ENCODE measurements at regions of chr19 and their contacts with region 1.

Region 1: DNA sequence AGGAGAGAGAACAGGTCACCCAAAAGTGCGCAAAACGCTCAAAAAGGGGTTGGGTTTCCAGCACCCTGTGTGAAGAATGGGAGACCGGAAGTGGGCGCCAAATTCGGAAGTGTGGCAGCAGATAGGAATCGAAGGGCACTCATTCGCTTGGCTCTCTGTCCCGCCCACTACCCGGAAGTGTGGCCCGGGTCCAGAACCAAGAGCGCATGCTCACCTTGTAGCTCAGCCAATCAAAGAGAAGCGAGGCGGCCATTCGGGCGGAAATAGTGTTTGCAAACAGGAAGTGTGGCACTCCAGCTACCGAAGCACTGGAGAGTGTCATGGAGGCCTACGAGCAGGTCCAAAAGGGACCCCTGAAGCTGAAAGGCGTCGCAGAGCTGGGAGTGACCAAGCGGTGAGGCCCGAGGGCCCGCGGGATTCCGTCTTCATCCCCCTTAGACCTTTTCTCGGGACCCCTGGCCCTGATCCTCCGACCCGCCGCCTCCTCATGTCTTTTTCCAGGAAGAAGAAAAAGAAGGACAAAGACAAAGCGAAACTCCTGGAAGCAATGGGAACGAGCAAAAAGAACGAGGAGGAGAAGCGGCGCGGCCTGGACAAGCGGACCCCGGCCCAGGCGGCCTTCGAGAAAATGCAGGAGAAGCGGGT is at the start of gene FAM32A:
- DNase-seq: peak; percentile 98
- H3K4me3 ChIP-seq: peak within 1 kb of the TSS; percentile 86
- H3K27ac ChIP-seq: peak within 1 kb of the TSS; percentile 58
- H3K4me1 ChIP-seq: peaks cover 18% of the 10 kb centered on the region
- H3K27me3 ChIP-seq: no peaks in the 10 kb centered on the region
- total RNA-seq, gene FAM32A: 114 and 120 TPM in 2 replicates

Region 2: DNA sequence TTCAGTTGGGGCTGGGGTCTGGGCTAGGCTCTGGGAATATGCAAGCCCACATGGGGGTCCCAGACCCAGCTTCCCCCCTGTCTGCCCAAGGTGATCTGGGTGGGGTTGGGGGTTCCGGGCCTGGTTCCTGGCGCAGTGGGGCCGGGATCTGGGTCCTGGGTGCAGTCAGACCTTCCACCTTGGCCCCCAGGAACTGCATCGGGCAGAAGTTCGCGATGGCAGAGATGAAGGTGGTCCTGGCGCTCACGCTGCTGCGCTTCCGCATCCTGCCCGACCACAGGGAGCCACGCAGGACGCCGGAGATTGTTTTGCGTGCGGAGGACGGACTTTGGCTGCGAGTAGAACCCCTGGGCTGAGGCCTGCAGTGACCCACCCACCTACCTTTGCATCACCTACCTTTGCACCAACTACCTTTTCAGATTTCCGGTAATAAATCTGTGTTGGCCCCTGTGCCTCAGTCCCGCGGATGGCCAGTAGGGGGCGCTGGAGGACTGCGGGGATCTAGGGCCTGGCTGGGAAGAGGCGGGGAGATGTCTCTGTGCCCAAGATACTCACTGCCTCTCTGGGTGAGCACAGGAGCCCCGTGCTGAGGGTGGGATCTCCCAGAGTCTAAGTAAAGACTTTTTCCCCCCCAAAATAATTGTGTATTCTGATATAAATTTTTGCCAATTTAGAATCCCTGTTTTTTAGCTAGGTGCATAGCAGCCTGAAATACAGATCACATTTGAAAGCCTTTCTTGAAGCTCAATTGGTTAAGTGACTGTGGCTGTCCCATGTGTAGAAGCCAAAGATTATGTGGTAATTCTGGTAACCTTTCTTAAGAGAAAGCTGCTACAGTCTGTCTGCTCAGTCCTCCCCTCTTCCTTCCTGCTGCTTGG is 556.0 kb before region 1 on chr19:
- in situ Hi-C with region 1: loop called (anchors 25 kb)
- DNase-seq: peak; percentile 69
- H3K4me3 ChIP-seq: no peak overlapping the region
- H3K27ac ChIP-seq: no peak overlapping the region
- H3K4me1 ChIP-seq: no peaks in the 10 kb centered on the region
- H3K27me3 ChIP-seq: no peaks in the 10 kb centered on the region

Region 3: DNA sequence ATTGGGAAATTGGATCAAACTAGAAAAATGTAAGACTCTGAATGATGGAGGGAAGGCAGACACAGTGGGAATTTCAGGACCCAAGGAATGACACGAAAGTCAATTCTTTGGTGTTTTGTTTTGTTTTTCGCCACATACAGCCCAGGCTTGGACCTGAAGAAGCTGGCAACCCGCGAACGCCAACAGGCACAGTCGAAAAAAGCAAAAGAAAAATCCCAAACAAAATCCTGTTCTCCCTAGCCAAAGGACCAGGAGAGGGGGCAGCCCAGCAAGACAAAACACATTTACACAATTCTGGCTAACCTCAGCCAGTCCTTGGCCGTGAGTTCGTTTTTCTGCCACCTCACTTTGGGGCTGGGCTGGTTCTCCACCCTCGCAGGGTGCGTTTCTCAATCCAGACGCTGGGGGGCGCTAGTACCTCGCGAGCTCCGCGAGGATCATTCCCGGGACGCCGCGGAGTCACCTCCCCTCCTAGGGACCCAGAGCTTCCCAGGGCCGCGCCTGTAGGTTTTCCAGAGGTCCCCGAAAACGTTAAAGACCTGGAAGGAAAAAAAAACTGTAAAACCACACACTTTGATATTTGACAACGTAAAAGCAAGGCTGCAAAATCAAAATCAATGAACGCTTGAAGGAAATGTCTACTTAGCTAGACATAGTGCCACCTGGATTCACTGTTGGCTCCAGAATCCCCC is 143.8 kb before region 1 on chr19:
- in situ Hi-C with region 1: loop called (anchors 10 kb)
- DNase-seq: peak; percentile 86
- H3K4me3 ChIP-seq: peak overlapping the region; percentile 65
- H3K27ac ChIP-seq: peak overlapping the region; percentile 45
- H3K4me1 ChIP-seq: peaks cover 5% of the 10 kb centered on the region; the same call in 1 of the 2 replicates
- H3K27me3 ChIP-seq: no peaks in the 10 kb centered on the region